ENCODE measurements at regions of chr15 and their contacts with region 1.

Region 1: GRCh38 chr15:66004618-66005262 is 135.4 kb downstream of the RAB11A start:
- DNase-seq: no peak
- ATAC-seq: no peak
- H3K4me3 ChIP-seq: no peak overlapping the region
- H3K27ac ChIP-seq: no peak overlapping the region
- H3K4me1 ChIP-seq: no peaks in the 10 kb centered on the region
- H3K27me3 ChIP-seq: 0 out of 4 replicates have a peak, but pooled peaks cover 0 to 1% of the 10 kb centered on the region in 2 experiments
- CTCF ChIP-seq: no peak
- EP300 ChIP-seq: no peak
- POLR2A ChIP-seq: no peak
- RAD21 ChIP-seq: no peak

Region 2: GRCh38 chr15:66188464-66188863 is 183.7 kb after region 1 on chr15:
- CTCF ChIA-PET with region 1: no interaction called
- POLR2A ChIA-PET with region 1: no interaction called
- RAD21 ChIA-PET with region 1: no interaction called
- SMC1A ChIA-PET with region 1: no interaction called
- in situ Hi-C with region 1: no loop called
- intact Hi-C with region 1: loop called (anchors 5 kb)
- DNase-seq: no peak
- ATAC-seq: peak; percentile 50; the same call in 1 of the 3 replicates
- H3K4me3 ChIP-seq: no peak overlapping the region
- H3K27ac ChIP-seq: no peak overlapping the region
- H3K4me1 ChIP-seq: no peaks in the 10 kb centered on the region
- H3K27me3 ChIP-seq: no peaks in the 10 kb centered on the region; a peak in 1 of 4 replicates
- CTCF ChIP-seq: peak in 1 of 3 experiments; percentile 30; a peak in 2 of 6 replicates
- EP300 ChIP-seq: no peak
- POLR2A ChIP-seq: no peak
- RAD21 ChIP-seq: peak; percentile 51